ENCODE measurements at regions of chr4 and their contacts with region 1.

Region 1: DNA sequence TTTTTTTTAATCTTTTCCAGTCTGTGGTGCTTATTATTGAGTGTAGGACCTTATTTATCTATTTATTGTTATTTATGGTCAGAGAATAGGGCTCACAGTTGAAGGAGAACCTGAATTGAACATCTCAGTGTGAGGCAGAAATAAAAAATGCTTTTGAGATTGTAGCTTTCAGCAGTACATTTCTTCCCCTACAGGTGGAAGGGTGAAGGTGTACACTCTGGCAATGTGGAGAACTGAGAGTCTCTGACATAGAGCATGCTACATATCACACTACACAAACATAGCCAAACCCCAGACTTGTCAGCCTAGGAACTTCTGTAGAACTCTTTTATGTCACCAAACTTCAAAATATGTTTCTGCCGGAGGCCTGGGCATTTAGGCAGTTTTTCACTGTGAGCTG is 140.2 kb downstream of the STIM2 start:
- DNase-seq: peak; percentile 23
- H3K4me3 Mint-ChIP-seq: no peak overlapping the region
- H3K27ac Mint-ChIP-seq: no peak overlapping the region
- H3K4me1 Mint-ChIP-seq: no peaks in the 10 kb centered on the region
- H3K27me3 Mint-ChIP-seq: no peaks in the 10 kb centered on the region
- CTCF ChIP-seq: no peak

Region 2: GRCh38 chr4:26780539-26780938 is 220.3 kb before region 1 on chr4:
- CTCF ChIA-PET with region 1: interaction called, 4 read pairs
- POLR2A ChIA-PET with region 1: interaction called, 12 read pairs
- intact Hi-C with region 1: no loop called
- DNase-seq: peak; percentile 94
- H3K4me3 Mint-ChIP-seq: no peak overlapping the region
- H3K27ac Mint-ChIP-seq: peak overlapping the region; percentile 77
- H3K4me1 Mint-ChIP-seq: peaks cover 16% of the 10 kb centered on the region
- H3K27me3 Mint-ChIP-seq: no peaks in the 10 kb centered on the region
- CTCF ChIP-seq: no peak

Region 3: GRCh38 chr4:26964512-26964911 is 36.3 kb before region 1 on chr4:
- CTCF ChIA-PET with region 1: no interaction called
- POLR2A ChIA-PET with region 1: no interaction called
- intact Hi-C with region 1: no loop called
- DNase-seq: no peak
- H3K4me3 Mint-ChIP-seq: no peak overlapping the region
- H3K27ac Mint-ChIP-seq: no peak overlapping the region
- H3K4me1 Mint-ChIP-seq: peaks cover 10% of the 10 kb centered on the region
- H3K27me3 Mint-ChIP-seq: no peaks in the 10 kb centered on the region
- CTCF ChIP-seq: no peak

Region 4: GRCh38 chr4:26985873-26986272 is 14.9 kb before region 1 on chr4:
- CTCF ChIA-PET with region 1: no interaction called
- POLR2A ChIA-PET with region 1: no interaction called
- intact Hi-C with region 1: no loop called
- DNase-seq: no peak
- H3K4me3 Mint-ChIP-seq: no peak overlapping the region
- H3K27ac Mint-ChIP-seq: no peak overlapping the region
- H3K4me1 Mint-ChIP-seq: no peaks in the 10 kb centered on the region
- H3K27me3 Mint-ChIP-seq: no peaks in the 10 kb centered on the region
- CTCF ChIP-seq: no peak